Heart right ventricle (tissue), 16 donors: ENCODE measurements at regions of chr2 and their contacts with region 1.

Region 1: GRCh38 chr2:25521665-25522387 is 151.6 kb downstream of the DTNB start:
- DNase-seq: peak in 1 of 2 donors; percentile 46
- ATAC-seq: peak in 7 of 8 donors; percentile 55 to 83 (median 67)
- H3K4me3 ChIP-seq: peak overlapping the region in 6 of 10 donors; percentile 20 to 39 (median 32)
- H3K27ac ChIP-seq: peak overlapping the region in 2 of 10 donors; percentile 4 to 41
- H3K4me1 ChIP-seq: peaks cover 0 to 16% (median 4%) of the 10 kb centered on the region in 9 donors
- H3K27me3 ChIP-seq: no peaks in the 10 kb centered on the region
- CTCF ChIP-seq: peak; percentile 67 to 87 (median 79)

Region 2: DNA sequence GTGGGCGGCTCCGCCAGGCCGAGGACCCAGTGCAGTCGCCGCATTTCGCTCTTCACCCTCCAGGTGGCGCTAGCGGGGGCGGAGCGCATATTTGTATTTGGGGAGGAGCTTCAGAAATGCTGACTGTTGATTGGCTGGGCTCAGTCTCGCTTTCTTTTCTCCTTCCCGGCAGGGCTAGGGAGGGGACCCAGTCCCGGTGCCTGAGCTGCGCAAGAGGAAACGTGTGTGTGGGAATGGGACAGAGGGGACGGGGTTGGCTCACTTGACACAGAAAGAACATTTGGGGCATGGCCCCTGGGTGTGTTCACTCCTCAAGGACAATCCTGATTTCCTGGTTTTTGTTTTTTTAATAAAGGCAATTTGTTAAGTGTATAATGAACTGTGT is 159.8 kb before region 1 on chr2:
- intact Hi-C with region 1: loop called in 1 of 10 experiments (anchors 5 kb)
- DNase-seq: peak; percentile 91 to 93
- ATAC-seq: peak; percentile 96 to 99 (median 99)
- H3K4me3 ChIP-seq: peak overlapping the region in 9 of 10 donors; percentile 4 to 56 (median 33)
- H3K27ac ChIP-seq: peak overlapping the region in 9 of 10 donors; percentile 32 to 87 (median 71)
- H3K4me1 ChIP-seq: peaks cover 0 to 18% (median 7%) of the 10 kb centered on the region in 9 donors
- H3K27me3 ChIP-seq: no peaks in the 10 kb centered on the region
- CTCF ChIP-seq: peak; percentile 97 to 100 (median 99)

Region 3: DNA sequence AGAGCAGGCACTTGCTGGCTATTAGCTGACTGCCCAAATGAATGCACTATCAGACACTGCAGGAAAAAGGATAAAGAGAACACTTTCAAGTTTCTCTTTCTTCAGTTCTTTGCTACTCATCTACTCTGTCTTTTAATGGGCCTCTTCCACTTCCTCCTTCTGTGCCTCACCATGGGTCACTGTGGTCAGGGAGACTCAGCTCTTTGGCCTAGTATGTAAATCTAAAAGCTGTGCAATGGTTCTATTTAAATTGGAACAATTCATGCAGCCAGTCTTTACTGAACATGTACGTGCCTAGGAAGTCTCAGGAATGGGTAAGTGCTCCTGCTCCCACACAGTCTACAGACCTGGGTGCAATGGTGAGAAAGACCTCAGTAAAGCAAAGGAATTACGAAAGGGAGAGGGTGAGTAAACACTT is 101.0 kb before region 1 on chr2:
- intact Hi-C with region 1: no loop called
- DNase-seq: no peak
- ATAC-seq: no peak
- H3K4me3 ChIP-seq: no peak overlapping the region
- H3K27ac ChIP-seq: peak overlapping the region in 1 of 10 donors; percentile 29
- H3K4me1 ChIP-seq: peaks cover 0 to 25% (median 0%) of the 10 kb centered on the region in 9 donors
- H3K27me3 ChIP-seq: no peaks in the 10 kb centered on the region
- CTCF ChIP-seq: no peak